Activated CD4-positive, alpha-beta memory T cell treated with anti-CD3 and anti-CD28 coated beads for 36 hours (primary cell): ENCODE measurements at regions of chr11 and their contacts with region 1.

Region 1: DNA sequence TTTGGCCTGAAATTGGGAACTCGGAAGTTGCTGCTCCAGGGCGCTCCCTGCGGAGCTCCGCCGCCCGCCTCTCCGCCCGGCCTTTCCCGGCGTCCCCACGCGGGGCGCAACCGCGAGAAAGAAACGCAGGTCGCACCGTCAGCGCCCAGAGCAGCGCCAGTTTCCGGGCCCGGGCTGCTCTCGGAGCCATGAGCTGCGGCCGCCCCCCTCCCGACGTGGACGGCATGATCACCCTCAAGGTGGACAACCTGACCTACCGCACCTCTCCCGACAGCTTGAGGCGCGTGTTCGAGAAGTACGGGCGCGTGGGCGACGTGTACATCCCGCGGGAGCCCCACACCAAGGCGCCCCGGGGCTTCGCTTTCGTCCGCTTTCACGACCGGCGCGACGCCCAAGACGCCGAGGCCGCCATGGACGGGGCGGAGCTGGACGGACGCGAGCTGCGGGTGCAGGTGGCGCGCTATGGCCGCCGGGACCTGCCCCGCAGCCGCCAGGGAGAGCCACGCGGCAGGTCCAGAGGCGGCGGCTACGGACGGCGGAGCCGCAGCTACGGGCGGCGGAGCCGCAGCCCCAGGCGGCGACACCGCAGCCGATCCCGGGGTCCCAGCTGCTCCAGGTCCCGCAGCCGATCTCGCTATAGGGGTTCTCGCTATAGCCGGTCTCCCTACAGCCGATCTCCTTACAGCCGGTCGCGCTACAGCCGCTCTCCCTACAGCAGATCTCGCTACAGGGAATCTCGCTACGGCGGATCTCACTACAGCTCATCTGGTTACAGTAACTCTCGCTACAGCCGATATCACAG is 521 bp downstream of the SRSF8 start:
- DNase-seq: peak; percentile 85
- H3K4me3 Mint-ChIP-seq: peak overlapping the region; percentile 87
- H3K27ac Mint-ChIP-seq: peak overlapping the region; percentile 97
- H3K4me1 Mint-ChIP-seq: peaks cover 24% of the 10 kb centered on the region
- H3K27me3 Mint-ChIP-seq: no peaks in the 10 kb centered on the region

Region 2: GRCh38 chr11:94973099-94973968 is 93.9 kb before region 1 on chr11 and contains the starts of genes CWC15 and KDM4D:
- CTCF ChIA-PET with region 1: interaction called, 9 read pairs
- POLR2A ChIA-PET with region 1: interaction called, 17 read pairs
- intact Hi-C with region 1: loop called (anchors 1 kb)
- DNase-seq: peak; percentile 97
- H3K4me3 Mint-ChIP-seq: peak within 1 kb of the TSS; percentile 99
- H3K27ac Mint-ChIP-seq: peak within 1 kb of the TSS; percentile 86
- H3K4me1 Mint-ChIP-seq: peaks cover 34% of the 10 kb centered on the region
- H3K27me3 Mint-ChIP-seq: no peaks in the 10 kb centered on the region
- total RNA-seq, gene CWC15: 65.9 to 67.1 TPM
- total RNA-seq, gene KDM4D: 1.4 to 1.6 TPM

Region 3: DNA sequence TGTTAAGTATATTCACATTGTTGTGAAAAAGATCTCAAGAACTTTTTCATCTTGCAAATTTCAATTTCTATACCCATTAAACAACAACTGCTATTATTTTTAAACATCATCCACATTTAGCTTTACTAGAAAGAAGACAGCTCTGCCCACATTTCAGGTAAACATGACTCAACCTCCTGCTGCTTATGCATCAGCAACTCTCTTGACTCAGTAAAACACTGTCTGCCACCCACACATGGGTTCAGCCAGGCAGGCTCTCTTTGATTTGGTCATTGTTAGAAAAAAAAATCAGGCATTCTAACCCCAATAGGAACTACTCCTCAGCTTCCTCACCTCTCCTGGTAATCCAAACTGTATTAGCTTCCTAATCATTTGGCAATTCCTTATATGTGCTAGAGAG is 17.3 kb after region 1 on chr11:
- CTCF ChIA-PET with region 1: interaction called, 220 read pairs
- POLR2A ChIA-PET with region 1: interaction called, 59 read pairs
- intact Hi-C with region 1: loop called (anchors 1 kb)
- DNase-seq: peak; percentile 79
- H3K4me3 Mint-ChIP-seq: no peak overlapping the region
- H3K27ac Mint-ChIP-seq: peak overlapping the region; percentile 77
- H3K4me1 Mint-ChIP-seq: peaks cover 45% of the 10 kb centered on the region
- H3K27me3 Mint-ChIP-seq: no peaks in the 10 kb centered on the region

Region 4: GRCh38 chr11:95089620-95090542 is 22.6 kb after region 1 on chr11 and contains the start of gene ENDOD1:
- CTCF ChIA-PET with region 1: interaction called, 220 read pairs
- POLR2A ChIA-PET with region 1: interaction called, 59 read pairs
- intact Hi-C with region 1: loop called (anchors 1 kb)
- DNase-seq: peak; percentile 90
- H3K4me3 Mint-ChIP-seq: peak within 1 kb of the TSS; percentile 87
- H3K27ac Mint-ChIP-seq: peak within 1 kb of the TSS; percentile 92
- H3K4me1 Mint-ChIP-seq: peaks cover 68% of the 10 kb centered on the region
- H3K27me3 Mint-ChIP-seq: no peaks in the 10 kb centered on the region
- total RNA-seq, gene ENDOD1: 25.9 TPM

Region 5: GRCh38 chr11:95138448-95138847 is 71.2 kb after region 1 on chr11:
- CTCF ChIA-PET with region 1: interaction called, 16 read pairs
- POLR2A ChIA-PET with region 1: no interaction called
- intact Hi-C with region 1: loop called (anchors 1 kb)
- DNase-seq: no peak
- H3K4me3 Mint-ChIP-seq: no peak overlapping the region
- H3K27ac Mint-ChIP-seq: no peak overlapping the region
- H3K4me1 Mint-ChIP-seq: peaks cover 2% of the 10 kb centered on the region
- H3K27me3 Mint-ChIP-seq: peaks cover 5% of the 10 kb centered on the region

Region 6: DNA sequence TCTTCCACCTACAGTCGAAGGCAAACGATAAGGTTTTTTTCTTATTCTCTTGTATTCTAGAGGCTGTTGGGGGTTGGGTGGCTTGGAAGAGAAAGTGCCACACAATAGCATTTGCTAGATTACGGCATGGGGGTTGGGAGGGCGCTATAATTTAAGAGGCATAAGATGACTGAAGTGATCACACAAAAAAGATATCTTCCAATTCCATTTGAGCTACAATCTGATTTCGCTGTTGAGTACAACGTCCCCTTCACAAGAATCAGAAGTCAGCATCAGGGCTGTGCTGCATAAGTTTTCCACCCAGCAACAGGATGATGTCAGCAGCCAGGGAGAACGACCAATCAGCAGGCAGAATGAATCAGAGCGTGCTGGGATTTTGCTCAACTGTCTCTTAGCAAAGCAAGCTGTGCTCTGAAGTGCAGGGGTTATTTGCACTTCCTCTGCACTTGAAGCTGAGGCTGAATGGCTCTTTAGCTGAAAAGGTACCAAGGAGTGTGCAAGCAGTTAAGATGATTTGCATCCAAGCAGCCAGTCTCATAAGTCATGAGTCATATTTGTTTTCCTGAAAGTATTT is 187.0 kb after region 1 on chr11:
- CTCF ChIA-PET with region 1: no interaction called
- POLR2A ChIA-PET with region 1: no interaction called
- intact Hi-C with region 1: loop called (anchors 5 kb)
- DNase-seq: peak; percentile 91
- H3K4me3 Mint-ChIP-seq: peak overlapping the region; percentile 81
- H3K27ac Mint-ChIP-seq: peak overlapping the region; percentile 93
- H3K4me1 Mint-ChIP-seq: peaks cover 42% of the 10 kb centered on the region
- H3K27me3 Mint-ChIP-seq: no peaks in the 10 kb centered on the region

Region 7: DNA sequence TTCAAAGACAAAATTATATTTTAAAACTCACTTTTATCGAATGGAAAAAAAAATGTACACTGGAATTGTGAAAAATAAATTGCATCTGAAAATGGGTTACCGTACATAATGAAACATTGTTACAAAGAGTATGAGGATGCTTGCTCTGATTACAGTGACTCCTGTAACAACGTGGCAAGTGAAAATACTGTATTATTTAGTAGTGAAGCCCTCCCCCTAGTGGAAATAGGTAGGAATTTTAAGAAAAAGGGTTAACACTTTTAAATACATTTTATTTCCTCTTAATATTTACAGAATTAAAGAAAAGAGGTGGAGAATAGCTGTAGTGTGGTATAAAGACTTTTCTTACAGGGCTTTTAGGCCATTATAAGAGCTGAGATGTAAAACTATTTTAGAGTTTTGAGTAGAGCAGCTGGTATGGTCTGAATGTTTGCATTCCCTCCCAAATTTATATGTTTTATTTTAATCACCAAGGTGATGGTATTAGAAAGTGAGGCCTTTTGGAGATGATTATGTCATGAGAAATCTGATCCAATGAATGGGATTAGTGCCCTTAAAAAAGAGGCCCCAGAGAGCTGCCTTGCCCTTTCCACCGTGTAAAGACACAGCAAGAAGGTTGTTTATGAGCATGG is 697.1 kb after region 1 on chr11:
- CTCF ChIA-PET with region 1: no interaction called
- POLR2A ChIA-PET with region 1: interaction called, 3 read pairs
- intact Hi-C with region 1: loop called (anchors 2 kb)
- DNase-seq: no peak
- H3K4me3 Mint-ChIP-seq: no peak overlapping the region
- H3K27ac Mint-ChIP-seq: no peak overlapping the region
- H3K4me1 Mint-ChIP-seq: no peaks in the 10 kb centered on the region
- H3K27me3 Mint-ChIP-seq: no peaks in the 10 kb centered on the region